PC-9 (cell line): ENCODE measurements at regions of chr19 and their contacts with region 1.

Region 1: DNA sequence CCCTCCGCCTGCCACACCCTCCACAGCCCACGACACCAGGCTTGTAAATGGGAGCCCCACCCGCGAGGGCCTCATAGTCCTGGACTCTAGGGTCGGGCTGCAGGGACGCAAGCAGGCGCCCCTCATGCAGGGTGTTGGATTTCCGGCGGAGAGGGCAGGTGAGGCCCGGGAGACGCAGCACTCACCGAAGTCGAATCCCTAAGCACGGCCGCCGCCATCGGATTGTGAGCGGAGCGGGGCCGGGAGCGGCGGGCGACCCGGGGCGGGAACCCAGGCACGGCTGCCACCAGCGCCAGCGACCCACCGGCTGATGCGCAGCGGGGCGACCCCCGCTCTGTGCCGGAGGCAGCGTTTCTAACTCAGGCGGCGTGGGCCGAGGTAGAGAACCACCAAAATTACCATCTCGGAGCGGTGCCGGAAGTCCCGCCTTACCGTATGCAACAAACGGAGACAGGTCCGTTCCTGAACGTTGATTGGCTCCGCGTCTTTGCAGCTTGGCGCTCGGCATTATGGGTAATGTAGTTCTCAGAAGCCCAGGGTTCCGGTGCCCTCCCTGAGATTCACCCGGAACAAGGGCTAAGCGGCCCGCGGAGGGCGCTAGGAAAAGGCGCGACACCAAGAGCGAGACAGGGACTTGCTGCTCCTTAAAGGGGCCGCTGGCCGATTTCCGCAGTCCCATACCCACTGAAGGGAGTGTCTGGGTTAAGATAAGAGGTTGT is at the start of gene ZNF416:
- DNase-seq: peak; percentile 97
- H3K4me3 ChIP-seq: peak within 1 kb of the TSS; percentile 75
- H3K27ac ChIP-seq: no peak within 1 kb of the TSS
- H3K4me1 ChIP-seq: peaks cover 10% of the 10 kb centered on the region
- H3K27me3 ChIP-seq: 0 out of 2 replicates have a peak, but pooled peaks cover 3% of the 10 kb centered on the region
- CTCF ChIP-seq: no peak; the same call in 1 of the 2 replicates
- total RNA-seq, gene ZNF416: 4.8 and 5.6 TPM in 2 replicates

Region 2: DNA sequence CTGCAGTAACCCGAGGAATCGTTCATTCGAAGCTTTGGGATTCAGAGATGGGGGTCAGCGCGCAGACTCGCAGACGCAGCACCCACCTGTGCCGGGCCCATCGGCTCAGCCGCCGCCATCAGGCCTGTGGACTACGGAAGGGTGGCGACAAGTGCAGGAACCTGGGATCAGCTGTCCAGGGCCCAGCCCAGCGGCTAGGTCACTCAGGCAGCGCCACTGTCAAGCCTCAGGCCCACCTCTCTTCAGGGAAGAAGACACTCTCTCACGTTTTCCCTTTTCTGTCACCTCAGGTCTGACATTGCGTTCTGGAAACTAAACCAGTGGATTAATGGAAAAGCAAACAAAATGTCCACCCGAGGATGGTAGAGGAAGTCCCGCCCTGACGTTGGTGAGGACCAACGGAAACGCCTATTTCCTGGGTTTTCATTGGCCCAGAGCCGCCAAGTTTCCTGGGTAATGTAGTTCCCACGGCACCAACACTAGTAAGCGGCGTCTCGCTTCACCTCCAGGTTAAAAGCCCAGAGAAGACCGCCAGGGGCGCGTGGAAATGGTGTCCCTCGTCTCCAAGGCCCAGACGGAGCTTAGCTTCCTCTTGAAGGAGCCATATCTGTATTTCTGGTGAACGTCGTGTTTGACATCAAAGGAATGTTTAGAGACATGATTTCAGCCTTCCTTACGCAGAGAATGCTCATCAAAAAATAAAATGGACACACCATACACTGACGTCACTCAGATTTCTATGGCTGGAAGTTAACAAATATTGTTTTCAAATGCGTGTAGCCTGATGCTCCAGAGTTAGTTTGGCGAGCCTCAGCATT is 101.2 kb before region 1 on chr19 and contains the start of gene ZNF772:
- CTCF ChIA-PET with region 1: no interaction called
- POLR2A ChIA-PET with region 1: no interaction called
- intact Hi-C with region 1: loop called (anchors 5 kb)
- DNase-seq: peak; percentile 89 to 94
- H3K4me3 ChIP-seq: peak within 1 kb of the TSS; percentile 70
- H3K27ac ChIP-seq: no peak within 1 kb of the TSS
- H3K4me1 ChIP-seq: no peaks in the 10 kb centered on the region; the same call in 1 of the 2 replicates
- H3K27me3 ChIP-seq: no peaks in the 10 kb centered on the region
- CTCF ChIP-seq: peak; percentile 79
- total RNA-seq, gene ZNF772: 8.3 and 9.1 TPM in 2 replicates

Region 3: GRCh38 chr19:57515234-57515633 is 63.4 kb before region 1 on chr19:
- CTCF ChIA-PET with region 1: no interaction called
- POLR2A ChIA-PET with region 1: no interaction called
- intact Hi-C with region 1: no loop called
- DNase-seq: no peak
- H3K4me3 ChIP-seq: no peak overlapping the region
- H3K27ac ChIP-seq: no peak overlapping the region
- H3K4me1 ChIP-seq: no peaks in the 10 kb centered on the region
- H3K27me3 ChIP-seq: no peaks in the 10 kb centered on the region
- CTCF ChIP-seq: no peak

Region 4: GRCh38 chr19:57559404-57560025 is 19.1 kb before region 1 on chr19 and contains the start of gene ZNF550:
- CTCF ChIA-PET with region 1: no interaction called
- POLR2A ChIA-PET with region 1: no interaction called
- intact Hi-C with region 1: loop called (anchors 1 kb)
- DNase-seq: peak; percentile 83 to 93
- H3K4me3 ChIP-seq: peak within 1 kb of the TSS; percentile 90
- H3K27ac ChIP-seq: peak within 1 kb of the TSS; percentile 83
- H3K4me1 ChIP-seq: peaks cover 13% of the 10 kb centered on the region
- H3K27me3 ChIP-seq: no peaks in the 10 kb centered on the region; the same call in 1 of the 2 replicates
- CTCF ChIP-seq: no peak
- total RNA-seq, gene ZNF550: 18.2 and 19.8 TPM in 2 replicates

Region 5: DNA sequence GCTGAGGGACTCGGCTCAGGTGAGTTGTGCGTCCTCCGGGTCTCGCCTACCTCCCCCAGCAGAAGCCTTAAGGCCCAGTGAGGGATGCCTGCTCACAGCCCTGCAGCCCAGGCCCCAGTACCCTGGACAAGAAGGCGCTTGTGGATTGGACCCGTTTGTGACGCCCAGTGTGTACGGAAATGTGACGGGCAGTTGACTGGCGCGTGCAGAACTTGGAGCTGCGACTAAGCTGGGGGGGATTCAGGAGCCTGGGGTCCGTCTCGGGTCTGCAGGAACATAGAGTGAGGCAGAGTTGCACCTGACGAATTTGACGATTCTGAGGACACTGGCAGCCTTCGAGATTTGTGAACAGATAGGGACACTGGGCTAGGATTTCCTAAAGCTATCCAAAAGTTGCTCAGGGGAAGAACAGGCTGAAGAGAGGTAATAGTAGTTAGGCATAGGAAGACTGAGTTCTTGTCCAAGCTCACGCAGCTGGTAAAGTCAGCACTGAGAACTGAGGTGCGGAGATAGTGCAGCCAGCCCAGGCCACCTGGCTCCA is 103.7 kb after region 1 on chr19:
- CTCF ChIA-PET with region 1: interaction called, 3 read pairs
- POLR2A ChIA-PET with region 1: no interaction called
- intact Hi-C with region 1: loop called (anchors 1 kb)
- DNase-seq: no peak
- H3K4me3 ChIP-seq: peak overlapping the region; percentile 85
- H3K27ac ChIP-seq: no peak overlapping the region
- H3K4me1 ChIP-seq: 0 out of 2 replicates have a peak, but pooled peaks cover 7% of the 10 kb centered on the region
- H3K27me3 ChIP-seq: no peaks in the 10 kb centered on the region
- CTCF ChIP-seq: no peak

Region 6: GRCh38 chr19:57746580-57747471 is 168.2 kb after region 1 on chr19 and contains the start of gene ZNF776:
- CTCF ChIA-PET with region 1: no interaction called
- POLR2A ChIA-PET with region 1: interaction called, 10 read pairs
- intact Hi-C with region 1: no loop called
- DNase-seq: peak; percentile 78 to 89
- H3K4me3 ChIP-seq: peak within 1 kb of the TSS; percentile 98
- H3K27ac ChIP-seq: peak within 1 kb of the TSS; percentile 24; the same call in 1 of the 2 replicates
- H3K4me1 ChIP-seq: peaks cover 10% of the 10 kb centered on the region; the same call in 1 of the 2 replicates
- H3K27me3 ChIP-seq: no peaks in the 10 kb centered on the region
- CTCF ChIP-seq: no peak
- total RNA-seq, gene ZNF776: 16.9 and 17.8 TPM in 2 replicates